K562 (cell line): ENCODE measurements at regions of chr4 and their contacts with region 1.

Region 1: DNA sequence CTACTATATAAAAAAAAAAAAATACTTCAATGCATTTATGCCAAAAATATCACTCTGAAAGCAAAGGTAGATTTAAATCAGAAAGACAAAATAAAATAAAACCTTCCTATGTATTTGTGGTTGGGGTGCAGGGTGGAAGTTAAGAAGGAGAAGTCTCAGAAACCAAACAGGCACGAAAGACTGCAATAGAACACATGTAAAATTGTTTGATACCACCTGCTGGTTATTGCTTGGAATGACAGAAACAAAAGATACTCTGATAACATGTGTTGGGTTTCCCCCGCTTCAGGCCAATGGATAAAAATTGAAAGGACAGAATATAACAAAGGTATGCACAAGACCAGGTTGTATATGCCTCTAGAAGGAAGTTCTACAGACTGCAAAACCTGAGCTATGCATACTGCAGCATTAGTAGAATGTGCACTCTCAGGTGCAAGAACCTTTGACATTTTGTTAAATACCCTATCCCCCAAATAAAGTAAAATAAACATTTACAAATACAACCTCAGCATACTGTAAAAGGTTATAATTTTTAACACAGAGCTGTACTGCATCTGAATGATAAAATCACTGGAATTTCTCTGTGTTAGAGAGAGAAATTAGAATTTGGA is 118.8 kb downstream of the GABRA2 start:
- DNase-seq: peak in 3 of 4 experiments; percentile 9 to 12 (median 11)
- ATAC-seq: no peak
- H3K4me3 ChIP-seq: no peak overlapping the region
- H3K27ac ChIP-seq: no peak overlapping the region
- H3K4me1 ChIP-seq: no peaks in the 10 kb centered on the region
- H3K27me3 ChIP-seq: no peaks in the 10 kb centered on the region
- CTCF ChIP-seq: peak in 1 of 3 experiments; percentile 18; a peak in 1 of 6 replicates
- EP300 ChIP-seq: no peak
- POLR2A ChIP-seq: no peak
- RAD21 ChIP-seq: peak; percentile 42 to 43; a peak in 3 of 4 replicates

Region 2: DNA sequence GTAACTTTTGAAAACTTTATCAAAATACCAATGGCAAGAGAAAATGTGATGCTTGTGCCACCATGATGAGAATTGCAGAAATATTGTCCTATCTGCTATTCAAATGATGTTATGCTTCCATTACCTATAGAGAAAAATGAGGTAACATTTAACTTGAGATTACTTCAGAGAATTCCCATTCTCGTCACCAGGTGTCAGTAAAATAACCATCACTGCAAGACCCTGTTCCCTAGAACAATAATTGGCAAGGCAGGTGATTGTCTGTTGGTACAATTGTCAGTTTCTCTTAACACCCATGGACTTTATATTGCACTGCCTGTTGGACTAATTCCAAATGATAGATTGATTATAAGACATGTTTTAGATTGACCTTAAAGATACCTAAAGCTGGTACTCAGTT is 327.1 kb before region 1 on chr4:
- CTCF ChIA-PET with region 1: no interaction called
- POLR2A ChIA-PET with region 1: no interaction called
- in situ Hi-C with region 1: no loop called
- intact Hi-C with region 1: loop called (anchors 2 kb)
- DNase-seq: peak in 1 of 4 experiments; percentile 10
- ATAC-seq: no peak
- H3K4me3 ChIP-seq: no peak overlapping the region
- H3K27ac ChIP-seq: no peak overlapping the region
- H3K4me1 ChIP-seq: no peaks in the 10 kb centered on the region
- H3K27me3 ChIP-seq: no peaks in the 10 kb centered on the region
- CTCF ChIP-seq: 0 out of 6 replicates have a peak, but pooled peaks of 1 of the 3 experiments have one; percentile 23
- EP300 ChIP-seq: no peak
- POLR2A ChIP-seq: no peak
- RAD21 ChIP-seq: peak; percentile 28 to 57; a peak in 3 of 4 replicates

Region 3: DNA sequence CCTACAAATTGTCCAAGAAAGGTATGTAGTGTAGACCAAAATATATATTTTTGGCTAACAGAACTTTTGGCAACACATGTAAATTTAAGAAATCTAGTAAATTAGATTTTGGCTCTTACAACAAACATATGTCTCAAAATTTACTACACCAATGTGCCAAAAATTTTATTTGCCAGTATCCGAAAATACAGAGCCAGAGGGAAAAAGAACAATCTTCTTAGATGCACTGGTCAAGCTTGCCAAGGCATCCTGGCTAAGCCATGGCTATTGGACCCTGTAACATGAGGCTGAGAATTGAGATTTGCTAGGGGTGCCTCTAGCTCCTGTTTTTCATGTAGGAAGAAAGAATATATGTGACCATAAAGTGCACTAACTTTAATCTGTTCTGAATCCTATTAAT is 239.0 kb before region 1 on chr4:
- CTCF ChIA-PET with region 1: no interaction called
- POLR2A ChIA-PET with region 1: no interaction called
- in situ Hi-C with region 1: no loop called
- intact Hi-C with region 1: no loop called
- DNase-seq: no peak
- ATAC-seq: no peak
- H3K4me3 ChIP-seq: no peak overlapping the region
- H3K27ac ChIP-seq: no peak overlapping the region
- H3K4me1 ChIP-seq: no peaks in the 10 kb centered on the region
- H3K27me3 ChIP-seq: no peaks in the 10 kb centered on the region
- CTCF ChIP-seq: no peak
- EP300 ChIP-seq: no peak
- POLR2A ChIP-seq: no peak
- RAD21 ChIP-seq: no peak